ENCODE measurements at regions of chr19 and their contacts with region 1.

Region 1: DNA sequence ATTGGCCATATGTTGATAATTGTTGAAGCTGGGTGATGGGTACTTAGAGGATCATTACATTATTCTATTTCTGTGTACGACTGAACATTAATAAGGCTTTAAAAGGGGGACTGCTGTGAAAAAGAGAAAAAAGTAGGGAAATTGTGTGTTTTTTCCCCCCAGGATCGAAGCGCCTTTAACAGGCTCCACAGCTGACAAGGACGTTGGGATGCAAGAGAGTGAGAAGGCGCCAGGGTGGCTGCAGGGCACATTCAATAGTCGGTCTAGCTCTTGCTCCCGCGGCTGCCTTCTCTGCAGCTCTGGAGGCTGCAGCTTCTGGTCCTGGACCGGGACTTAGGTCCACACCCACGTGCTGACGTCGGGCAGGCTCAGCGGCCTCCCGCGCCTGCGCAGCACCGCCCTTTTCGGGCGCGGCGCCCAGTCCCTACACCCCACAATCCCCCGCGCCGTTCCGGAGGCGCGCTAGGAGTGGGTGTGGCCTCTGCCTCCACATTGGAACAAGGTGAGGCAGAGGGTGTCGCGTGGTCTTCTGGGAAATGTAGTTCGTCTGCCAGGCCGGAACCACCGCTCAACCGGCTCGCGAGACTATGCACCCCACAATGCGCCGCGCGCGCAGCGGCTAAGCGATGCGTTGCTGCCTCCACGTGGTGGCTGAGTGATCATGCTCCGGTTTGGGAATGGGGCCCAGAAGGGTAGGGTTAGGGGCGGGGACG is 4.9 kb upstream of the LRFN3 start:
- DNase-seq: peak; percentile 100
- ATAC-seq: peak; percentile 99
- H3K4me3 ChIP-seq: peak overlapping the region; percentile 37
- H3K27ac ChIP-seq: peak overlapping the region; percentile 63
- H3K4me1 ChIP-seq: peaks cover 15% of the 10 kb centered on the region
- H3K27me3 ChIP-seq: no peaks in the 10 kb centered on the region
- CTCF ChIP-seq: peak; percentile 82

Region 2: GRCh38 chr19:35879770-35880317 is 51.5 kb before region 1 on chr19:
- intact Hi-C with region 1: loop called (anchors 10 kb)
- DNase-seq: peak; percentile 95
- ATAC-seq: peak; percentile 96
- H3K4me3 ChIP-seq: no peak overlapping the region
- H3K27ac ChIP-seq: no peak overlapping the region
- H3K4me1 ChIP-seq: no peaks in the 10 kb centered on the region
- H3K27me3 ChIP-seq: peaks cover 18% of the 10 kb centered on the region
- CTCF ChIP-seq: no peak

Region 3: GRCh38 chr19:35977446-35978222 is 46.3 kb after region 1 on chr19:
- intact Hi-C with region 1: no loop called
- DNase-seq: no peak
- ATAC-seq: peak; percentile 14
- H3K4me3 ChIP-seq: no peak overlapping the region
- H3K27ac ChIP-seq: no peak overlapping the region
- H3K4me1 ChIP-seq: no peaks in the 10 kb centered on the region
- H3K27me3 ChIP-seq: no peaks in the 10 kb centered on the region
- CTCF ChIP-seq: no peak